Caco-2 (cell line): ENCODE measurements at regions of chr6 and their contacts with region 1.

Region 1: GRCh38 chr6:21240709-21241108 is 352.8 kb upstream of the SOX4 start:
- DNase-seq: peak in 1 of 2 experiments; percentile 38
- H3K4me3 ChIP-seq: no peak overlapping the region
- H3K4me3 Mint-ChIP-seq: no peak overlapping the region
- H3K27ac Mint-ChIP-seq: peak overlapping the region; percentile 2
- H3K4me1 ChIP-seq: peaks cover 15% of the 10 kb centered on the region
- H3K4me1 Mint-ChIP-seq: peaks cover 24% of the 10 kb centered on the region
- H3K27me3 ChIP-seq: no peaks in the 10 kb centered on the region
- H3K27me3 Mint-ChIP-seq: no peaks in the 10 kb centered on the region
- CTCF ChIP-seq: no peak

Region 2: GRCh38 chr6:21220271-21220987 is 20.3 kb before region 1 on chr6:
- CTCF ChIA-PET with region 1: no interaction called
- POLR2A ChIA-PET with region 1: no interaction called
- intact Hi-C with region 1: loop called (anchors 2 kb)
- DNase-seq: peak in 1 of 2 experiments; percentile 27
- H3K4me3 ChIP-seq: no peak overlapping the region
- H3K4me3 Mint-ChIP-seq: no peak overlapping the region
- H3K27ac Mint-ChIP-seq: peak overlapping the region; percentile 47
- H3K4me1 ChIP-seq: peaks cover 18% of the 10 kb centered on the region
- H3K4me1 Mint-ChIP-seq: peaks cover 10% of the 10 kb centered on the region
- H3K27me3 ChIP-seq: no peaks in the 10 kb centered on the region; the same call in 1 of the 2 replicates
- H3K27me3 Mint-ChIP-seq: no peaks in the 10 kb centered on the region
- CTCF ChIP-seq: no peak